ENCODE measurements at regions of chr2 and their contacts with region 1.

Region 1: DNA sequence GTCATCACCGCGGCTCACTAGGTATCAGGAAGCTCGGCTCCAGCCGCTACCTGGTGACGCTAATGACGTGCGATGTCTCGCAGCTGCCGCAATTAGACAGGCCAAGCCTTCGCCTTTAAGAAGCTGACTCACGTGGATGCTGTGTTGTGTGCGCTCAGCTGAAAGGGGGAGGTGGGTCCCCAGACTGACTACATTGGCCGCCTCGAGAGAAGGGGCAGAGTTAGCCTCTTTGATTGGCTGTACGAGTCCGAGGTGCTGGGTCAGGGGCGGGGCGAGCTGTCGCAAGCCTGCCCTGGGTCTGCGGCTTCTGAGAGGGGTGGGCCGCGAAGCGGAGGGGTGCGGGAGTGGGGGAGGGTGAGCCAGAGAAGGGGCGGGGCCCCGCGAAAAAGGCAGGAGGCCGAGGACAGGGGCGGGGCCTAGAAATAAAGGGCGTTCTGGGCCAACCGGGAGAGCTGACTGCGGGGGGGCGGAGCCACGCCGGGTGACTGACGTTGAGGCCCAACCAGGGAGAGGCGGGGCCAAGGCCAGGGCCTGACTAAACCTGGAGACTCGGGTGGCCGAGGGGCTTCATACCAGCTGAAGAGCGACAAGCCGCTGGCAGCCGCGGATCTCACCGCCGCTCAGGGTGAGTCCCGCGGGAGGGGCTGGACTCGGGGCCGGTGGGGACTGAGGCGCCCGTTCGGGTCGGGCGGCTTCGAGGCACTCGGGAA is at the start of gene YPEL5:
- DNase-seq: peak; percentile 99 to 100 (median 100)
- ATAC-seq: peak; percentile 82
- H3K4me3 ChIP-seq: peak within 1 kb of the TSS; percentile 75 to 76
- H3K4me3 Mint-ChIP-seq: peak within 1 kb of the TSS; percentile 89
- H3K27ac ChIP-seq: peak within 1 kb of the TSS; percentile 97 to 100
- H3K27ac Mint-ChIP-seq: peak within 1 kb of the TSS; percentile 100
- H3K4me1 ChIP-seq: peaks cover 50% of the 10 kb centered on the region
- H3K4me1 Mint-ChIP-seq: peaks cover 60% of the 10 kb centered on the region
- H3K27me3 ChIP-seq: no peaks in the 10 kb centered on the region
- H3K27me3 Mint-ChIP-seq: no peaks in the 10 kb centered on the region
- CTCF ChIP-seq: no peak
- total RNA-seq, gene YPEL5: 1,051 to 1,071 TPM

Region 2: GRCh38 chr2:28621172-28622100 is 1525.2 kb before region 1 on chr2:
- CTCF ChIA-PET with region 1: no interaction called
- POLR2A ChIA-PET with region 1: no interaction called
- intact Hi-C with region 1: loop called in 1 of 2 experiments (anchors 5 kb)
- DNase-seq: peak; percentile 60 to 96 (median 78)
- ATAC-seq: peak; percentile 85
- H3K4me3 ChIP-seq: peak overlapping the region; percentile 19 to 33
- H3K4me3 Mint-ChIP-seq: peak overlapping the region; percentile 68
- H3K27ac ChIP-seq: peak overlapping the region; percentile 86 to 98
- H3K27ac Mint-ChIP-seq: peak overlapping the region; percentile 99
- H3K4me1 ChIP-seq: peaks cover 87% of the 10 kb centered on the region
- H3K4me1 Mint-ChIP-seq: peaks cover 92% of the 10 kb centered on the region
- H3K27me3 ChIP-seq: no peaks in the 10 kb centered on the region
- H3K27me3 Mint-ChIP-seq: no peaks in the 10 kb centered on the region
- CTCF ChIP-seq: no peak

Region 3: GRCh38 chr2:30098266-30099005 is 48.2 kb before region 1 on chr2:
- CTCF ChIA-PET with region 1: no interaction called
- POLR2A ChIA-PET with region 1: no interaction called
- intact Hi-C with region 1: loop called in 1 of 2 experiments (anchors 5 kb)
- DNase-seq: no peak
- ATAC-seq: no peak
- H3K4me3 ChIP-seq: no peak overlapping the region
- H3K4me3 Mint-ChIP-seq: no peak overlapping the region
- H3K27ac ChIP-seq: no peak overlapping the region
- H3K27ac Mint-ChIP-seq: no peak overlapping the region
- H3K4me1 ChIP-seq: no peaks in the 10 kb centered on the region
- H3K4me1 Mint-ChIP-seq: no peaks in the 10 kb centered on the region
- H3K27me3 ChIP-seq: no peaks in the 10 kb centered on the region
- H3K27me3 Mint-ChIP-seq: peaks cover 22% of the 10 kb centered on the region
- CTCF ChIP-seq: no peak

Region 4: GRCh38 chr2:30225131-30225762 is 78.7 kb after region 1 on chr2:
- CTCF ChIA-PET with region 1: interaction called, 8 read pairs
- POLR2A ChIA-PET with region 1: interaction called, 83 read pairs
- intact Hi-C with region 1: no loop called
- DNase-seq: peak in 8 of 9 experiments; percentile 37 to 86 (median 57)
- ATAC-seq: peak; percentile 68
- H3K4me3 ChIP-seq: peak overlapping the region; percentile 59 to 61
- H3K4me3 Mint-ChIP-seq: peak overlapping the region; percentile 99
- H3K27ac ChIP-seq: peak overlapping the region; percentile 78 to 93
- H3K27ac Mint-ChIP-seq: peak overlapping the region; percentile 100
- H3K4me1 ChIP-seq: peaks cover 76% of the 10 kb centered on the region
- H3K4me1 Mint-ChIP-seq: peaks cover 83% of the 10 kb centered on the region
- H3K27me3 ChIP-seq: no peaks in the 10 kb centered on the region
- H3K27me3 Mint-ChIP-seq: no peaks in the 10 kb centered on the region
- CTCF ChIP-seq: no peak

Region 5: DNA sequence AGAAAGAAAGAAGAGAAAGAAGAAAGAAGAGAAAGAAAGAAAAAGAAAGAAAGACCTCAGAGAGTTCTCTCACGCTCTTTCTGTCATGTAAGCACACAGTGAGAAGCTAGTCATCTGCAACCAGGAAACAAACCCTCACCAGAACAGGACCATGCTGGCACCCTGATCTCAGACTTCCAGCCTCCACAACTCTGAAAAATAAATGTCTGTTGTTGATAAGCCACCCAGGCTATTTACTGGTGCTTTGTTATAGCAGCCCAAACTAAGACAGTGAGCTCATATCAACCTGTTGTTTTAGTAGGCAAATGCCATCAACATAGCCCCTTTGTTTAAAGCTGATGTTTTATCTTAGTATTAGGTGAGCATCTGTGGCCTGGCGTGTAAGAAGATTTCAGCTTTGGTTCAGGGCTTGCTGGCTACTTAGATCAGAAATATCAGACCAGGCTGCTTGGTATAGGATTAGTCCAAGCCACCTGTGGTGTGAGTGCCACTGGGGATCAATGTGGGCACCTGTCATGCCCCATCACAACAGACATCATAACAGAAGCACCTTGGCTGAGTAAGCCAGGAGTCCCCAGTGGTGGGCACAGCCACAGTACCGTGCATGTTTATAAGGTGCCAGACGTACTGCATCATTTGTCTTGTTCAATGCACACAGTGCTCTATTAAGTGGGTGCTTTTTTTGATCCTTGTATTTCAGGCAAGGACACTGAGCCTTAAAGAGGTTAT is 179.2 kb after region 1 on chr2:
- CTCF ChIA-PET with region 1: no interaction called
- POLR2A ChIA-PET with region 1: no interaction called
- intact Hi-C with region 1: no loop called
- DNase-seq: peak in 1 of 9 experiments; percentile 31
- ATAC-seq: peak; percentile 69
- H3K4me3 ChIP-seq: no peak overlapping the region
- H3K4me3 Mint-ChIP-seq: peak overlapping the region; percentile 16
- H3K27ac ChIP-seq: no peak overlapping the region
- H3K27ac Mint-ChIP-seq: peak overlapping the region; percentile 82
- H3K4me1 ChIP-seq: peaks cover 24% of the 10 kb centered on the region
- H3K4me1 Mint-ChIP-seq: peaks cover 36% of the 10 kb centered on the region
- H3K27me3 ChIP-seq: no peaks in the 10 kb centered on the region
- H3K27me3 Mint-ChIP-seq: no peaks in the 10 kb centered on the region
- CTCF ChIP-seq: no peak

Region 6: GRCh38 chr2:30447149-30448045 is 300.8 kb after region 1 on chr2 and contains the start of gene LCLAT1:
- CTCF ChIA-PET with region 1: no interaction called
- POLR2A ChIA-PET with region 1: no interaction called
- intact Hi-C with region 1: loop called (anchors 2 to 5 kb)
- DNase-seq: peak; percentile 66 to 95 (median 84)
- ATAC-seq: peak; percentile 88
- H3K4me3 ChIP-seq: peak within 1 kb of the TSS; percentile 87 to 99
- H3K4me3 Mint-ChIP-seq: peak within 1 kb of the TSS; percentile 94
- H3K27ac ChIP-seq: peak within 1 kb of the TSS; percentile 92 to 95
- H3K27ac Mint-ChIP-seq: peak within 1 kb of the TSS; percentile 98
- H3K4me1 ChIP-seq: peaks cover 20% of the 10 kb centered on the region
- H3K4me1 Mint-ChIP-seq: peaks cover 45% of the 10 kb centered on the region
- H3K27me3 ChIP-seq: no peaks in the 10 kb centered on the region
- H3K27me3 Mint-ChIP-seq: no peaks in the 10 kb centered on the region
- CTCF ChIP-seq: no peak
- total RNA-seq, gene LCLAT1: 11.3 to 12.1 TPM

Measured in CD8-positive, alpha-beta T cell (primary cell).